ENCODE measurements at regions of chr7 and their contacts with region 1.

Region 1: GRCh38 chr7:87886875-87887274 is 10.6 kb downstream of the DBF4 start:
- DNase-seq: peak in 2 of 9 experiments; percentile 50 to 63
- ATAC-seq: no peak
- H3K4me3 ChIP-seq: no peak overlapping the region
- H3K4me3 Mint-ChIP-seq: no peak overlapping the region
- H3K27ac ChIP-seq: no peak overlapping the region
- H3K27ac Mint-ChIP-seq: no peak overlapping the region
- H3K4me1 ChIP-seq: no peaks in the 10 kb centered on the region
- H3K4me1 Mint-ChIP-seq: peaks cover 9% of the 10 kb centered on the region
- H3K27me3 ChIP-seq: no peaks in the 10 kb centered on the region
- H3K27me3 Mint-ChIP-seq: no peaks in the 10 kb centered on the region
- CTCF ChIP-seq: peak; percentile 72

Region 2: DNA sequence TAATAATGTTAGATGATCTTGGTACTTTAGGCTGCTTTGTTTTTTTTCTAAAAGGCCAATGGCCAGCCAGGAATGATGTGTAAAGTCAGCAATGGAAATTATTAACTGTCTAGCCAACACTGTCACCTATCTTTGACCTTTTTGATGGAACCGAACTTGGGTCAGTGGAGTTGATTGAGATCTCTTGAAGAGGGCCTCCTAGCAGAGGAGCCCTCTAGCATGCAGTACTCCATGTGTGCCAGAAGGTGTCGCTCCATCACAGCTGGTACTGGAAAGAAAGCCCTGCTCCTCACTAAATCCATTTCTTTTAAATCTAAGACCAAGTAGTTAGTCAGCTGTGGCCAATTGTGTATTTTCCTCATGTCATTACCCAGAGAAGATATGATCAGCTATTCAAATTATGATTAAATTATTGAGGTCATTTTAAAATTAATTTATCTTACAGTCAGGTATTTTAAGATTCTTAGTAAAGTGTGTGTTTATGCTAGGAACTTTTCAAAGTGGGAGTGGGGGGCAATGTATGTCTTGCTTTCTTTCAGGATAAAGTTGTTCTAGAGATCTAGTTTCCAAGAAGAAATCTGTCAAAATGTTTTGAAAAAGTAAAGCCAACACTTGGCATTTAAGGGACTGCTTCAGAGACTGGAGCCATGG is 574.5 kb before region 1 on chr7:
- CTCF ChIA-PET with region 1: no interaction called
- POLR2A ChIA-PET with region 1: no interaction called
- intact Hi-C with region 1: loop called (anchors 2 kb)
- DNase-seq: peak; percentile 19 to 76 (median 66)
- ATAC-seq: peak; percentile 98
- H3K4me3 ChIP-seq: no peak overlapping the region
- H3K4me3 Mint-ChIP-seq: no peak overlapping the region
- H3K27ac ChIP-seq: no peak overlapping the region
- H3K27ac Mint-ChIP-seq: no peak overlapping the region
- H3K4me1 ChIP-seq: no peaks in the 10 kb centered on the region
- H3K4me1 Mint-ChIP-seq: peaks cover 7% of the 10 kb centered on the region
- H3K27me3 ChIP-seq: no peaks in the 10 kb centered on the region
- H3K27me3 Mint-ChIP-seq: peaks cover 2% of the 10 kb centered on the region
- CTCF ChIP-seq: peak; percentile 97

Region 3: DNA sequence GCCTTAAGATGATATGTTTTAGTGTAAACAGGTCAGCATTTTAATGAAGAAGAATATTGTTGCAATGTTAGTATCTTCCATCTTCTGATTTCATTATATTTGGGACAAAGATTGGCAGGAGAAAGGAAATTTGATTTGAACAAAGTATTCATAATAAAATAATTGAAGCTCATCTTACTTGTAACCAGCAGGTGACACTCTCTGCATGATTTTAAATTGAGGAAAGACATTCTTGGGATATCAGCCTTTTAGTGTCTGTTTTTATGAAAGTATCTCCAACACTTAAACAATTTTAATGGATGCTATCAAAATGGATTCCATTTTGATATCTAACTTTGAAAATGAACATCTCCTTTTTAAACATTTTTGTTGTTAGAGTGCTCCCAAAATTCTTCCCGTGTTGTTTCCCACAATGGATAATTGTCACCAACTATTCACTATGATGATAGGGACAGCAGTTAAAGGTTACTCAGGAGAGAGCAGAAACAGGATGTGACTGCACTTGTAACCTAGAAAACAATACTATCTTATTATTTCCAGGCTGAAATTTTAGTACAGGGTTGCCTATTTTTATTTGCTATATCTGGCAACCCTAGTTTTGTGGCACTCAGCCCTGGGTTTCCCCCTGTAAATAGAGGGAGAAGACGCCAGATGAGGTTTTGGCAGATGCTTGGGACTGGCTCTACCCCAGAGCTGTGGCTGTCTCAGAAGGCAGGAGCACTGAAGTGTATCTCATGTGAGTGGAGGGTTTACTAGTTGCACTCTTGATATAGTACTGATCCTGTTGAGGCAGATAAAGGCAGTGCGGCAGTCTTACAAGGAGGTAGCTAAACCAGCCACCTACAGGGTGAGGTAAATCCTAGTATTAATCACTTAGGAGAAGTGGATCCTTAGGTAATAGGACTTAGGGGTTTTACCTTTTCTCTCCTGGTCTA is 380.4 kb before region 1 on chr7:
- CTCF ChIA-PET with region 1: interaction called, 10 read pairs
- POLR2A ChIA-PET with region 1: no interaction called
- intact Hi-C with region 1: loop called (anchors 1 to 2 kb)
- DNase-seq: peak in 2 of 9 experiments; percentile 8 to 28
- ATAC-seq: no peak
- H3K4me3 ChIP-seq: no peak overlapping the region
- H3K4me3 Mint-ChIP-seq: no peak overlapping the region
- H3K27ac ChIP-seq: no peak overlapping the region
- H3K27ac Mint-ChIP-seq: no peak overlapping the region
- H3K4me1 ChIP-seq: no peaks in the 10 kb centered on the region
- H3K4me1 Mint-ChIP-seq: no peaks in the 10 kb centered on the region
- H3K27me3 ChIP-seq: no peaks in the 10 kb centered on the region
- H3K27me3 Mint-ChIP-seq: no peaks in the 10 kb centered on the region
- CTCF ChIP-seq: no peak

Region 4: DNA sequence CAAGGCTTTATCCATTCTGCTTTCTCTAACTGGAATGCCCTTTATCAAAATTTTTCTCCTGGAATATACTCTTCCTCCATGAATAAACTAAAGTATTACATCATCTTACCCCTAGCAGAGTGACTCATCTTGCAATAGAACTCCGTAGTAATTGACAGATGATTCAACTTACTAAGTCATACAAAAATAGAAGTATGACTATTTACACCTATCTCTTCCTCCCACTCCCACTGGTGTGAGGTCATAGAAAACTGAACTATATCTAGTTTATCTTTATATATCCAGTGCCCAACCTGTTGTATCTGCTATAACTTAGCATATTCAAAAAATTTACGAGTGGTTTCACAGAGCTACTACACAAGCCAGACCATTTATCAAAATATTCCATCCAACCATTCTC is 312.2 kb before region 1 on chr7:
- CTCF ChIA-PET with region 1: no interaction called
- POLR2A ChIA-PET with region 1: no interaction called
- intact Hi-C with region 1: no loop called
- DNase-seq: no peak
- ATAC-seq: no peak
- H3K4me3 ChIP-seq: no peak overlapping the region
- H3K4me3 Mint-ChIP-seq: no peak overlapping the region
- H3K27ac ChIP-seq: no peak overlapping the region
- H3K27ac Mint-ChIP-seq: no peak overlapping the region
- H3K4me1 ChIP-seq: no peaks in the 10 kb centered on the region
- H3K4me1 Mint-ChIP-seq: peaks cover 15% of the 10 kb centered on the region
- H3K27me3 ChIP-seq: no peaks in the 10 kb centered on the region
- H3K27me3 Mint-ChIP-seq: no peaks in the 10 kb centered on the region
- CTCF ChIP-seq: no peak

Region 5: GRCh38 chr7:87797798-87798403 is 89.0 kb before region 1 on chr7:
- CTCF ChIA-PET with region 1: interaction called, 36 read pairs
- POLR2A ChIA-PET with region 1: interaction called, 7 read pairs
- intact Hi-C with region 1: loop called (anchors 1 kb)
- DNase-seq: peak in 2 of 9 experiments; percentile 56 to 68
- ATAC-seq: peak; percentile 80
- H3K4me3 ChIP-seq: no peak overlapping the region
- H3K4me3 Mint-ChIP-seq: no peak overlapping the region
- H3K27ac ChIP-seq: no peak overlapping the region
- H3K27ac Mint-ChIP-seq: no peak overlapping the region
- H3K4me1 ChIP-seq: no peaks in the 10 kb centered on the region
- H3K4me1 Mint-ChIP-seq: no peaks in the 10 kb centered on the region
- H3K27me3 ChIP-seq: no peaks in the 10 kb centered on the region
- H3K27me3 Mint-ChIP-seq: peaks cover 6% of the 10 kb centered on the region
- CTCF ChIP-seq: peak; percentile 55